Gastrocnemius medialis (tissue), 4 donors: ENCODE measurements at regions of chr13 and their contacts with region 1.

Region 1: GRCh38 chr13:73754727-73755292 is 379.4 kb downstream of the KLF12 start:
- DNase-seq: no peak
- ATAC-seq: peak; percentile 56 to 66
- H3K4me3 ChIP-seq: no peak overlapping the region
- H3K27ac ChIP-seq: no peak overlapping the region
- H3K4me1 ChIP-seq: peaks cover 9 to 12% of the 10 kb centered on the region in 2 donors
- H3K27me3 ChIP-seq: no peaks in the 10 kb centered on the region
- CTCF ChIP-seq: peak; percentile 48 to 73 (median 59)
- POLR2A ChIP-seq: no peak

Region 2: GRCh38 chr13:73058736-73059459 is 695.9 kb before region 1 on chr13 and contains the start of gene KLF5:
- in situ Hi-C with region 1: no loop called
- intact Hi-C with region 1: no loop called
- DNase-seq: peak; percentile 96 to 98
- ATAC-seq: peak; percentile 86 to 90
- H3K4me3 ChIP-seq: peak within 1 kb of the TSS; percentile 76 to 89 (median 84)
- H3K27ac ChIP-seq: peak within 1 kb of the TSS; percentile 90 to 94 (median 92)
- H3K4me1 ChIP-seq: peaks cover 5 to 8% of the 10 kb centered on the region in 2 donors
- H3K27me3 ChIP-seq: peaks cover 0 to 7% (median 0%) of the 10 kb centered on the region in 3 donors
- CTCF ChIP-seq: no peak
- POLR2A ChIP-seq: peak; percentile 99 to 100
- total RNA-seq, gene KLF5: 9.8 to 15.6 (median 10.9) TPM

Region 3: DNA sequence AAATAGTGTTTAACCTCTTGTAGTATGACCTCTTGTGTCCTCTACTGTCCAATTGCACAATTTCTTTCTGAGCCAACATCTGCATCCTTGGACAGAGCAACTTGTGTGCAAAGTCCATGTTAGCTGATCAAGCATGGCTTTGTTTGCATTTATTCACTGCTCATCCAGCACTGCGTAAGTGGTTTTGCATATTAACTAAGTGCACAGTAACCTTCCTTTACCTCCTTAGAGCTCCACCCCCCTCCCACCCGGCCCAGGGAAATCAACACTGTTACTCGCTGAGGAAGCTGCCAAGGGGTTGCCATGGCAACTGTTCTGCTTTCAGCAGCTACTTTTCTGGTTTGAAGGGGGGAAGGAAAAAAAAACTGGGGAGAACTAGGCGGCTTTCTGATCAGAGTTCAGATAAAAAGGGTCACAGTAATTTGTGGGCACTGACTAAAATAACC is 532.9 kb after region 1 on chr13:
- in situ Hi-C with region 1: no loop called
- intact Hi-C with region 1: loop called (anchors 2 kb)
- DNase-seq: peak; percentile 26 to 43
- ATAC-seq: no peak
- H3K4me3 ChIP-seq: peak overlapping the region; percentile 8 to 28 (median 18)
- H3K27ac ChIP-seq: no peak overlapping the region
- H3K4me1 ChIP-seq: peaks cover 34 to 43% of the 10 kb centered on the region in 2 donors
- H3K27me3 ChIP-seq: no peaks in the 10 kb centered on the region
- CTCF ChIP-seq: no peak
- POLR2A ChIP-seq: no peak

Region 4: GRCh38 chr13:75219479-75220237 is 1464.8 kb after region 1 on chr13:
- in situ Hi-C with region 1: loop called in 3 of 4 experiments (anchors 25 kb)
- intact Hi-C with region 1: loop called (anchors 5 kb)
- DNase-seq: peak; percentile 27 to 51
- ATAC-seq: peak; percentile 80 to 82
- H3K4me3 ChIP-seq: peak overlapping the region; percentile 3 to 37 (median 29)
- H3K27ac ChIP-seq: no peak overlapping the region
- H3K4me1 ChIP-seq: no peaks in the 10 kb centered on the region
- H3K27me3 ChIP-seq: no peaks in the 10 kb centered on the region
- CTCF ChIP-seq: peak; percentile 75 to 98 (median 86)
- POLR2A ChIP-seq: no peak